ENCODE measurements at regions of chr20 and their contacts with region 1.

Region 1: DNA sequence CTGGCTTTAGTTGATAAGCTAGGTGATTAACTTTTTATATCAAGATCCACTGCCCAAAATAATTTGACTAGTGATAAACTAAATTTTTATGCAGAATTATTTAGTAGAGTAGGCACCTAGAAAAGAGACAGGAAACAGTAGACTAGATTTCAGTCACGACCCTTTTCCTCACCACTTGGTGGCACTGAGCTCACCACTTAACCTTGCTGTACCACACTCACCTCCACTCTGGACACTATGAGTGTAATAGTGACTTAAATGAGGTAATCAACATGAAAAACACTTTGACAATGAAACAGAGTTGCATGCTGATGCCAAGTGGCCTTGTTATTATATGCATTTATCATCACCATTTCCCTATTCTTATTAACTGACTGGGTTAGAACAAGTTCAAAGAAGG is 730.4 kb downstream of the KIF16B start:
- DNase-seq: no peak
- ATAC-seq: peak; percentile 90
- H3K4me3 Mint-ChIP-seq: no peak overlapping the region
- H3K27ac Mint-ChIP-seq: peak overlapping the region; percentile 21
- H3K4me1 Mint-ChIP-seq: peaks cover 13% of the 10 kb centered on the region
- H3K27me3 Mint-ChIP-seq: no peaks in the 10 kb centered on the region
- CTCF ChIP-seq: no peak

Region 2: GRCh38 chr20:16241915-16242314 is 399.0 kb after region 1 on chr20:
- CTCF ChIA-PET with region 1: interaction called, 4 read pairs
- POLR2A ChIA-PET with region 1: no interaction called
- intact Hi-C with region 1: loop called (anchors 1 kb)
- DNase-seq: no peak
- ATAC-seq: no peak
- H3K4me3 Mint-ChIP-seq: no peak overlapping the region
- H3K27ac Mint-ChIP-seq: no peak overlapping the region
- H3K4me1 Mint-ChIP-seq: peaks cover 9% of the 10 kb centered on the region
- H3K27me3 Mint-ChIP-seq: peaks cover 3% of the 10 kb centered on the region
- CTCF ChIP-seq: no peak

Measured in activated B cell treated with CpG ODN at 0.5 μM for 24 hours (primary cell).